AG04450 (cell line): ENCODE measurements at regions of chr10 and their contacts with region 1.

Region 1: GRCh38 chr10:35218339-35218955 is 91.8 kb downstream of the CREM start:
- DNase-seq: peak; percentile 74
- H3K4me3 ChIP-seq: 0 out of 2 replicates have a peak overlapping the region, but pooled peaks have one; percentile 7
- H3K27ac ChIP-seq: no peak overlapping the region
- H3K27me3 ChIP-seq: no peaks in the 10 kb centered on the region
- CTCF ChIP-seq: peak; percentile 83

Region 2: GRCh38 chr10:33952692-33953348 is 1265.6 kb before region 1 on chr10:
- CTCF ChIA-PET with region 1: no interaction called
- POLR2A ChIA-PET with region 1: no interaction called
- DNase-seq: peak; percentile 4
- H3K4me3 ChIP-seq: no peak overlapping the region
- H3K27ac ChIP-seq: no peak overlapping the region
- H3K27me3 ChIP-seq: no peaks in the 10 kb centered on the region
- CTCF ChIP-seq: no peak

Region 3: DNA sequence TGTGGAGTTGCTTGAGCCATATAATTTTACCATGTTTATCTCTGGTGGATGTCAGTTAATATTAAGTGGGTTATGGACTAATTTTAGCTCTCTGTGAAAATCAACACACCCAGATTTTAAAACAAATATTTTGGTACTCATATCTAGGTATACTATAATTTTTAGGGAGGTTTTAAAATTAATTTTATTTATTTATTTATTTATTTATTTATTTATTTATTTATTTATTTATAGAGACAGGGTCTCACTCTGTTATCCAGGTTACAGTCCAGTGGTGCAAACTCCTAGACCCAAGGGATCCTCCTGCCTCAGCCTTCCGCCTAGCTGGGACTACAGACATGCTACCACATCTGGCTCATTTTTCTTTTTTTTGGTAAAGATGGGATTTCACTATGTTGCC is 99.1 kb before region 1 on chr10:
- CTCF ChIA-PET with region 1: interaction called, 127 read pairs
- POLR2A ChIA-PET with region 1: no interaction called
- DNase-seq: no peak
- H3K4me3 ChIP-seq: no peak overlapping the region
- H3K27ac ChIP-seq: no peak overlapping the region
- H3K27me3 ChIP-seq: no peaks in the 10 kb centered on the region
- CTCF ChIP-seq: no peak

Region 4: DNA sequence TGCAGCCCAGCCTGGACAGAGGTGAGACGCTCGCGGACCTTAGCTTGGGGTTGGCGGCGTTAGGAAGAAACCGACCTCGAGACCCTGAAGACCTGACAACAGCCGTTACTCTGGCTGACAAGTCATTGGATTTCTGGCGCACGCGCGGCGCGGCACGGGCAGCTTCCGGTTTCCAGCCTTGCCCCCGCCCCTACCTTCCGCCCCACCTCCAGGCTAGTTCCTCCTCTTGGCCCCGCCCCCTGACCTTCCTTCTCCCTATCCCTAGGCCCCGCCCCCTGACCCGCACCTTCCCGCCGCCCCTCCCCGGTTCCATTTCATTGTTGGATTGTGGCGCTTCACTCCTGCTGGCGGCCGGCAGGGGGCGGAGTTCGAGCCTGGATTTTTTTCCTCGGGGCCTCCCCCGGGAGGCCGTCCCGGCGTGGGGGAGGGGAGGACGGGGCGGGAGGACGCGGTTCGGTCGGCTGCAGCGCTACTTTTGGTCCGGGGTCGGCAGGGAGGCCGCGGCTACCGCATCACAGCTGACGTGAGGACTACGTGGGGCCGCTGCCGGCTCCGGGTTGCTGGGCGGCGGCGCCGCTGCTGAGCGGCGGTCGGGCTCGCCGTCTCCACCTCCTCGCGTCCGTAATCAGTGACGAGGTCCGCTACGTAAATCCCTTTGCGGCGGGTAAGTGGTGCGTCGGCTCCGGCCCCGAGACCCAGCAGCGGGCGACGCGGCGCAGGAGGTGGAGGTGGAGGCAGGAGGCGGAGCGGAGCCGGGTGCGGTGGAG is 91.7 kb before region 1 on chr10 and contains the start of gene CREM:
- CTCF ChIA-PET with region 1: interaction called, 127 read pairs
- POLR2A ChIA-PET with region 1: interaction called, 3 read pairs
- DNase-seq: peak; percentile 90
- H3K4me3 ChIP-seq: peak within 1 kb of the TSS; percentile 82
- H3K27ac ChIP-seq: peak within 1 kb of the TSS; percentile 99
- H3K27me3 ChIP-seq: no peaks in the 10 kb centered on the region
- CTCF ChIP-seq: peak; percentile 72
- polyA plus RNA-seq, gene CREM: 37.9 and 48.2 TPM in 2 replicates